Activated CD4-positive, alpha-beta T cell treated with anti-CD3 and anti-CD28 coated beads, Interleukin-2, amount 10 ng/mL, durations not matched to agents 24 days and 14 days (primary cell): ENCODE measurements at regions of chr2 and their contacts with region 1.

Region 1: GRCh38 chr2:100242891-100243619 is 79.2 kb downstream of the LONRF2 start:
- DNase-seq: peak; percentile 82
- H3K4me3 Mint-ChIP-seq: no peak overlapping the region
- H3K27ac Mint-ChIP-seq: no peak overlapping the region
- H3K4me1 Mint-ChIP-seq: no peaks in the 10 kb centered on the region
- H3K27me3 Mint-ChIP-seq: no peaks in the 10 kb centered on the region

Region 2: DNA sequence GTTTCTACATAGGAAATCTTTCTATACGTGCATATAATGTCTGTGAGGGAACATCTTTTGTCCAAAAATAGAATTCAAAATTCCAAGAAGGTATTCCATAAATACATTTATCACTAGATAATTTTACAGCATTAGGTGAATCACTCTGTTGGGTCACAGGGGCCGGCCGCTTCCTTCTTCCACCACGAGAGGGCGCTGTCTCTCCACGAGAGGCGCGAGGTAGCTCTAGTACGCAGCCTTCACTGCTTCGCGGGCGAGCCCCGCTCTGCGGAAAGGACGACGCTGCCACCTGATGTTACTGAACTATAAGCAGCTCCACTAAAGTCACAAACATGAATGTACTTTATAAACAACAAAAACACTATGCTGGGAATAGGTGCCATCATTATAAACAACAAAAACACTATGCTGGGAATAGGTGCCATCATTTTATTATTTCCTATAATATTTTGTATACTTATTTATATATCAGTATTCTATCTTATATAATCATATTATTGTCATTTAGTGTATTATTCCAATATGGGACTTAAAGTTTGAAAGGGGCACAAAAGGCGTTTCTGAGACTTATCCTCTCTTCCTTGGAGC is 683.9 kb before region 1 on chr2:
- intact Hi-C with region 1: loop called (anchors 1 kb)
- DNase-seq: peak; percentile 93
- H3K4me3 Mint-ChIP-seq: no peak overlapping the region
- H3K27ac Mint-ChIP-seq: no peak overlapping the region
- H3K4me1 Mint-ChIP-seq: peaks cover 2% of the 10 kb centered on the region
- H3K27me3 Mint-ChIP-seq: peaks cover 2% of the 10 kb centered on the region